Dorsolateral prefrontal cortex (tissue), 120 donors: ENCODE measurements at regions of chr7 and their contacts with region 1.

Region 1: DNA sequence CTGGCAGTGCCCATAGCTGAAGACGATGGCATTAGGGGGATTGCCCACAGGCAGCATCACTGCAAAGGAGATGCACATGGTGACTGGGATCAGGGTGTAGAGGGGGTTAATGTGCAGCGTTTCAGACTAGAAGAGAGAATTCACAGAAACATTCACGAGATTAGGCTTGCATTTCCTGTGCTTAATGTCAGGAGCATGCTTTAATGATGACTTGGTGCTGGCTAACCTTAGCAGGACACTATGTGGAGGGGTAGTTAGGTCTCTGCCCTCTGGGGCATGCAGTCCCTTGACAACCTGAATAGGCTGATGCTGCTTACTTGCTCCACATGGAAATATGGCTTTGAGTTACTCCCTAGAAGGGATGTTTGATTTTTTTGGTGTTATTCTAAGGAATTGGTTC is 21.8 kb downstream of the STMP1 start:
- DNase-seq: no peak
- H3K4me3 ChIP-seq: no peak overlapping the region
- H3K27ac ChIP-seq: no peak overlapping the region
- H3K27me3 ChIP-seq: no peaks in the 10 kb centered on the region
- CTCF ChIP-seq: no peak

Region 2: GRCh38 chr7:135981958-135982646 is 298.0 kb after region 1 on chr7:
- intact Hi-C with region 1: no loop called
- DNase-seq: no peak
- H3K4me3 ChIP-seq: peak overlapping the region in 1 of 59 donors; percentile 19
- H3K27ac ChIP-seq: no peak overlapping the region
- H3K27me3 ChIP-seq: no peaks in the 10 kb centered on the region
- CTCF ChIP-seq: no peak

Region 3: GRCh38 chr7:136183981-136184380 is 499.8 kb after region 1 on chr7:
- intact Hi-C with region 1: no loop called
- DNase-seq: no peak
- H3K4me3 ChIP-seq: peak overlapping the region in 1 of 59 donors; percentile 6
- H3K27ac ChIP-seq: no peak overlapping the region
- H3K27me3 ChIP-seq: no peaks in the 10 kb centered on the region
- CTCF ChIP-seq: peak in 22 of 56 donors; percentile 12 to 42 (median 21)

Region 4: GRCh38 chr7:137337902-137338301 is 1653.8 kb after region 1 on chr7:
- intact Hi-C with region 1: loop called in 1 of 2 experiments (anchors 10 kb)
- DNase-seq: no peak
- H3K4me3 ChIP-seq: peak overlapping the region in 11 of 59 donors; percentile 3 to 18 (median 13)
- H3K27ac ChIP-seq: peak overlapping the region in 25 of 59 donors; percentile 3 to 91 (median 38)
- H3K27me3 ChIP-seq: no peaks in the 10 kb centered on the region
- CTCF ChIP-seq: peak in 53 of 56 donors; percentile 10 to 65 (median 36)